Naive thymus-derived CD4-positive, alpha-beta T cell (primary cell): ENCODE measurements at regions of chr6 and their contacts with region 1.

Region 1: DNA sequence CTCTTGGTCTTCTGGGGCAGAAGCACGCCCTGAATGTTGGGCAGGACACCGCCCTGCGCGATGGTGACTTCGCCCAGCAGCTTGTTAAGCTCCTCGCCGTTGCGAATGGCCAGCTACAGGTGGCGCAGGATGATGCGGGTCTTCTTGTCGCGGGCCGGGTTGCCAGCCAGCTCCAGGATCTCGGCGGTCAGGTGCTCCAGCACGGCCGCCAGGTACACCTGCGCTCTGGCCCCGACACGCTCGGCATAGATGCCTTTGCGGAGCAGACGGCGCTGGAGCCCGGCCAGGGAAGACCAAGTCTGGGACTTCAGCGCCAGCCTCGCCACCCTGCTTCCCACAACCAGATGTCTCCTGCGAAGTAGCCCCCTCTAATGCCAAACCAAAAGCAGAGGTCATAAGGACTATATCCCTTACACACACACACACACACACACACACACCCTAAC is 8.0 kb upstream of the SLC17A3 start:
- DNase-seq: peak in 7 of 9 donors; percentile 10 to 61 (median 35)
- ATAC-seq: peak; percentile 81
- H3K4me3 ChIP-seq: peak overlapping the region; percentile 53
- H3K4me3 Mint-ChIP-seq: peak overlapping the region in 8 of 10 donors; percentile 71 to 88 (median 84)
- H3K27ac ChIP-seq: no peak overlapping the region
- H3K27ac Mint-ChIP-seq: peak overlapping the region in 4 of 9 donors; percentile 16 to 60 (median 33)
- H3K4me1 ChIP-seq: no peaks in the 10 kb centered on the region
- H3K4me1 Mint-ChIP-seq: peaks cover 0 to 14% (median 0%) of the 10 kb centered on the region in 7 donors
- H3K27me3 ChIP-seq: no peaks in the 10 kb centered on the region
- H3K27me3 Mint-ChIP-seq: peaks cover 0 to 7% (median 0%) of the 10 kb centered on the region in 5 donors

Region 2: GRCh38 chr6:25866011-25866410 is 16.1 kb before region 1 on chr6:
- CTCF ChIA-PET with region 1: no interaction called
- POLR2A ChIA-PET with region 1: interaction called, 3 read pairs
- intact Hi-C with region 1: loop called in 1 of 2 experiments (anchors 2 kb)
- DNase-seq: peak in 7 of 9 donors; percentile 60 to 82 (median 72)
- ATAC-seq: peak; percentile 95
- H3K4me3 ChIP-seq: no peak overlapping the region
- H3K4me3 Mint-ChIP-seq: peak overlapping the region in 7 of 10 donors; percentile 23 to 70 (median 54)
- H3K27ac ChIP-seq: no peak overlapping the region
- H3K27ac Mint-ChIP-seq: peak overlapping the region in 8 of 9 donors; percentile 6 to 91 (median 80)
- H3K4me1 ChIP-seq: peaks cover 13 to 20% of the 10 kb centered on the region in 2 donors
- H3K4me1 Mint-ChIP-seq: peaks cover 8 to 34% (median 31%) of the 10 kb centered on the region in 7 donors
- H3K27me3 ChIP-seq: no peaks in the 10 kb centered on the region
- H3K27me3 Mint-ChIP-seq: peaks cover 0 to 7% (median 0%) of the 10 kb centered on the region in 5 donors